Caco-2 (cell line): ENCODE measurements at regions of chr19 and their contacts with region 1.

Region 1: GRCh38 chr19:55703790-55704215 is 28.8 kb downstream of the EPN1 start:
- DNase-seq: peak in 1 of 2 experiments; percentile 51
- H3K4me3 ChIP-seq: no peak overlapping the region
- H3K4me3 Mint-ChIP-seq: peak overlapping the region; percentile 17
- H3K27ac Mint-ChIP-seq: no peak overlapping the region
- H3K4me1 ChIP-seq: peaks cover 27% of the 10 kb centered on the region
- H3K4me1 Mint-ChIP-seq: peaks cover 30% of the 10 kb centered on the region
- H3K27me3 ChIP-seq: no peaks in the 10 kb centered on the region
- H3K27me3 Mint-ChIP-seq: no peaks in the 10 kb centered on the region
- CTCF ChIP-seq: peak; percentile 64 to 71

Region 2: DNA sequence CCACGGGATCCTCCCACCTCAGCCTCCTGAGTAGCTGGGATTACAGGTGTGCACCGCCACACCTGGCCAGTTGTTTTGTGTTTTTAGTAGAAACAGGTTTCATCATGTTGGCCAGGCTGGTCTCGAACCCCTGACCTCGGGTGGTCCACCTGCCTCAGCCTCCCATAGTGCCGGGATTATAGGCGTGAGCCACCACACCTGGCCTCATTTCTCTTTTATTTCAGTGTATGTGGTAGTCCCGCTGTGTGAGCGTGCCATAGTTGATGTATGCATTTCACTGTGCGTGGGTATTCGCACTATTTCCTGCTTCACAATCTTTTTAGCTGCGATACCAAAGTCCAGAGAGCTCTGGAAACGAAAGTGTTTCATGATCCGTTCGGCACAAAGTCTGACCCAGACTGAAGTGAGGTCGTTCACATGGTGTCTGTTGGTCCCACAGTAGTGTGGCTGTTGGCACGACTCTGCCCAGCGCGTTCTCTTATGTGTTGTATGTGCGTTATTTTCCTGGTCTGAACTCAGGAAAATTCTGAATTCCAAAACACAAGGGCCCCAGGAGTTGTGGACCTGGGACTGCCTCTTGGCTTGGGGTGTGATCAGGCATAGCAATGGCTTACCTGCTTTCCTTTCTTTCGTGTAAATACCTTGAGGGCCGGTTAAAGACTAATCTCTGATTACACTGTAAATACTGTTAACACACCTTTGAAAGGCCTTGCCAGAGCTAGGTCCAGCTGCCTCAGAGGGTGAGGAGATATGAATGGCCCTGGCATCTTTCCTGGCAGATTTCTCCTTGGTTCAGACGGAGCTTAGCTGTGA is 20.1 kb before region 1 on chr19:
- CTCF ChIA-PET with region 1: interaction called, 7 read pairs
- POLR2A ChIA-PET with region 1: interaction called, 3 read pairs
- intact Hi-C with region 1: loop called (anchors 1 kb)
- DNase-seq: peak; percentile 69 to 79
- H3K4me3 ChIP-seq: peak overlapping the region; percentile 5; the same call in 1 of the 2 replicates
- H3K4me3 Mint-ChIP-seq: peak overlapping the region; percentile 71
- H3K27ac Mint-ChIP-seq: peak overlapping the region; percentile 94
- H3K4me1 ChIP-seq: peaks cover 49% of the 10 kb centered on the region
- H3K4me1 Mint-ChIP-seq: peaks cover 39% of the 10 kb centered on the region
- H3K27me3 ChIP-seq: no peaks in the 10 kb centered on the region
- H3K27me3 Mint-ChIP-seq: no peaks in the 10 kb centered on the region
- CTCF ChIP-seq: no peak

Region 3: DNA sequence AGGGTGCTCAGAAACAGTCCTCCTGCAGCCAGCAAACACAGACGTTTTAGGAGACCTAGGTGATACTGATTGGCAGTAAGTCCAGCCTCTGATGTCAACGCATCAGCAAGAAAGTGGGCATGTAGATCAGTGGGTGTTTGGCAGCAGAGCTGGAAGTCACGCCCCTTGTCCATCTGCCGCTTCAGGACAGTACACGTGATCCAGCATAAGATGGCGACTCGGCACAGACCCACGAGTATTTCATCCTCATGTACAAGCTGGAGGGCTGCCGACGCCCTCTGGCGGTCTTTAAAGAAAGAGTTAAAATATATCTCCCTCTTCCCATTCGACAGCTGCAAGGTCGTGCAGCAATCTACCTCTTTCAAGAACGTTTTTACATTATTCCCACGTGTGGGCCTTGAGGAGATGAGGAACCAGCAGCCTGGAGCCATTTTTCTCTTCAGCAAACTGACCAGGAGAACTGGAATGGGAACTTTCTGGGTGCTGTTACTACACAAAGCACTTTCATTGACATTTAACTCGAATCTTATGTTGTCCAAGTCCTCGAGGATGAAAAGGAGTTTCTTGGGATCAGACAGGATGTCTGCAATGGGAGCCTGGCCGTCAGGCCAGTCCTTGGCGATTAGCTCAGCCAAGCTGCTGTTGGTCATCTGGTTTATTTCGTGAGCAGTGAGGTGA is 105.7 kb after region 1 on chr19:
- CTCF ChIA-PET with region 1: no interaction called
- POLR2A ChIA-PET with region 1: no interaction called
- intact Hi-C with region 1: loop called (anchors 10 kb)
- DNase-seq: peak; percentile 73 to 86
- H3K4me3 ChIP-seq: no peak overlapping the region
- H3K4me3 Mint-ChIP-seq: no peak overlapping the region
- H3K27ac Mint-ChIP-seq: no peak overlapping the region
- H3K4me1 ChIP-seq: 0 out of 2 replicates have a peak, but pooled peaks cover 4% of the 10 kb centered on the region
- H3K4me1 Mint-ChIP-seq: no peaks in the 10 kb centered on the region
- H3K27me3 ChIP-seq: no peaks in the 10 kb centered on the region
- H3K27me3 Mint-ChIP-seq: peaks cover 26% of the 10 kb centered on the region
- CTCF ChIP-seq: peak; percentile 40 to 67